OCI-LY7 (cell line): ENCODE measurements at regions of chr6 and their contacts with region 1.

Region 1: DNA sequence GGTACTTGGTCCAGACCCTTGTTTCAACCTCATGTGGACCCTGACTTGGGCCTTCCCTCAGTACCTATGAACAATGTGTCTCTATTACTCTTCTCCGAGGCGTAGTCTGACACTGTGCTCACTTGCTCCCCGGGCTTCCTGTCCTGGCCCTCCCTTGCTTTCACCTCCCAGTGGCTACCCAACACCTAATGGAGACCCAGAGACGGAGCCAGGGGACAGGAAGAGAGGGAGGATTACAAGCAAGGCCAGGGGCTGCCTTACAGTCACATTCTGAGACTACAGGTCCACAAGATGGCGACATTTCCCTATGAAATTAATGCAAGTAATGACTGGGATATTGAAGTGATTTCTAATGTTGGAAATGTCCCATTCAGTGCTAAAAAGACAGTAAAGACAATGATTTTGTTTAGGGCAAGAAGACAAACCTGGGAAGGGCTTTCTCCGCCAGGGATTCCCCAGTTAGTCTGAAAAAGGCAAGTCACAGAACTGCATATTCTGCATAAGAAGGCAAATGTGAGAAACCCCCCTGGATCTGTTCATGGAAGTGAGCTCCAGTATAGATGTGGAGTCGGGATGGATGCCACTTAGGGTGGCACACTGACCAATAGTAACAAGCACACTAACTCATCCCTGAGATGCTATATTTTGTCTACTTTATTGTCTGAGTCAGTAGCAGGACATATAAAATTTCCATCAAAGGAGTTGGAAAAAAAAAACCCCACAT is 44.0 kb upstream of the ZBTB24 start:
- DNase-seq: peak; percentile 76
- H3K4me3 ChIP-seq: no peak overlapping the region
- H3K27ac ChIP-seq: no peak overlapping the region
- H3K4me1 ChIP-seq: no peaks in the 10 kb centered on the region
- CTCF ChIP-seq: peak; percentile 87

Region 2: DNA sequence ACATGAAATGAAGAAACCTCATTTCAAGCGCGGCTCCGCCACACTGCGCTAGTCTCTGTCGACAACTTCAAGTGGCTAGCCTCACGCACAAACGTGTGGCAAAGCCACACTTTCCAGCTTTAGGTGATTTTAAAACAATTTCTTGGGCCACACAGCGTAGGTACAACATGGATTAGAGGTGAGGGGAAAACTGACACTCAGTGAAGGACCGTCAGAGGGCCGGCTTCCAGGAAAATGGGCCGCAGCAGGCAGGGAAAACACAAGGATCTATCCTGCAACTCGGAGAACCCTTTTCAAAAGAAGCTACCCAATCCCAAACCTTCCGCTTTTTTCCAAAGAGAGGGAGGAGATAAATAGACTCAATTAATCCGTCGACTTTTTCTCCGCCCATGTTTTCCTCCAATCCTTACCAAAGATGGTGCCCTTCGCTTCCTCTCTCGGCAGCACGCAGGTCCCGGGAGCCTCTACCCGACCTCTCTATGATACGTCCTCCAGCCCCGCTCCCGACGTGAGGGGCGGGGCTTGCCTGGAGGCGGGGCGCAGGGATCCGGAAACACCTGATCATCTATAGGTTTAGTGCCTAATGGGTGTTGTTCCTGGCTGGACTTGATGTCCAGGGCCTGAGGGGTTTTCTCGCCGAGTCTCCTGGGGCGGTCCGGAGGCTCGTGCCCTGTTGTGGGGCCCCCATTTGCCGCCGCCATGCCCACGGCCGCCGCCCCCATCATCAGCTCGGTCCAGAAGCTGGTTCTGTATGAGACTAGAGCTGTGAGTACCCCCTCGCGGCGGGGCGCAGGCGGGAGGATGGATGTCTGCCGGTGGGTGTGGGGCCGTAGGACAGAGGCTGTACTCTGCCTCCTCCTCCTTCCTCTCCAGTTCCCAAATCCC is 163.9 kb after region 1 on chr6 and contains the starts of genes AK9 and FIG4:
- CTCF ChIA-PET with region 1: no interaction called
- POLR2A ChIA-PET with region 1: no interaction called
- intact Hi-C with region 1: loop called (anchors 5 kb)
- DNase-seq: peak; percentile 92
- H3K4me3 ChIP-seq: peak within 1 kb of the TSS; percentile 93
- H3K27ac ChIP-seq: peak within 1 kb of the TSS; percentile 31
- H3K4me1 ChIP-seq: peaks cover 27% of the 10 kb centered on the region
- CTCF ChIP-seq: peak; percentile 57
- total RNA-seq, gene AK9: 2.0 and 6.7 TPM in 2 replicates
- total RNA-seq, gene FIG4: 10.4 and 13.3 TPM in 2 replicates

Region 3: DNA sequence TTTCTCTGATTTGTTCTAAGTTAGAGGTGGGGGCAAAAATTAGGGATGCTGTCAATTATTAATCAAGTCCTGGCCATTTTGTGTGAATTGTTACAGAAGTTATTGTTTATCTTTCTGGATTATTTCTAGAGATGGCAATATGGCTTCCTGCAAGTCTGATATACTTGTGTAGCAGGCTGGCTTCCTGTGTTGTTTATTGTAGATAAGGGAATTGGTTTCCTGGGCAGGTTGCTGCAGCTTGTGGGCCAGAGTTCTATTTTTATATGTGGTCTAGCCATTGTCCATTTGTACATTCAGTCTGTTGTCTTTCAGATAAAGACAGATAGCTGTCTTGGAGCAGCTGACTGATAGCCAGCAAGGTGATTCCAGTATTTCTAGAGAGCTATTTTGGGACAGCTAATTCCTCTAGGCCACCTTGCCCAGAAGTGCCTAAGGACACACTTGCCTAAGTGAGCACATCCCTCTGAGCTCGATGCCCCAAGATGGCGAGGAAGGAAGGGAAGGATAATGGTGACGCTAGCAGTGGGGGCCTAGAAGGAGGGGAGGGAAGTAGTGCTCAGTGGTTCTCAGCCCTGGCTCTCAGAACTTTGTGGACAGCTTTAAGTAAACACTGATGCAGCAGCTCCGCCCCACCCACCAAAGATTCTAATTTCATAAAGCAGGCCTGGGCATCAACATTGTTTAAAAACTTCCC is 862.8 kb after region 1 on chr6:
- CTCF ChIA-PET with region 1: no interaction called
- POLR2A ChIA-PET with region 1: no interaction called
- intact Hi-C with region 1: loop called (anchors 5 kb)
- DNase-seq: peak; percentile 9
- H3K4me3 ChIP-seq: no peak overlapping the region
- H3K27ac ChIP-seq: no peak overlapping the region
- H3K4me1 ChIP-seq: no peaks in the 10 kb centered on the region
- CTCF ChIP-seq: no peak